PC-3 (cell line): ENCODE measurements at regions of chr12 and their contacts with region 1.

Region 1: GRCh38 chr12:94560431-94561221 is 89.7 kb downstream of the TMCC3 start:
- DNase-seq: peak; percentile 97
- ATAC-seq: peak; percentile 96
- H3K4me3 ChIP-seq: peak overlapping the region; percentile 46; the same call in 1 of the 2 replicates
- H3K27ac ChIP-seq: peak overlapping the region; percentile 58
- H3K4me1 ChIP-seq: peaks cover 29% of the 10 kb centered on the region
- H3K27me3 ChIP-seq: no peaks in the 10 kb centered on the region
- CTCF ChIP-seq: no peak

Region 2: DNA sequence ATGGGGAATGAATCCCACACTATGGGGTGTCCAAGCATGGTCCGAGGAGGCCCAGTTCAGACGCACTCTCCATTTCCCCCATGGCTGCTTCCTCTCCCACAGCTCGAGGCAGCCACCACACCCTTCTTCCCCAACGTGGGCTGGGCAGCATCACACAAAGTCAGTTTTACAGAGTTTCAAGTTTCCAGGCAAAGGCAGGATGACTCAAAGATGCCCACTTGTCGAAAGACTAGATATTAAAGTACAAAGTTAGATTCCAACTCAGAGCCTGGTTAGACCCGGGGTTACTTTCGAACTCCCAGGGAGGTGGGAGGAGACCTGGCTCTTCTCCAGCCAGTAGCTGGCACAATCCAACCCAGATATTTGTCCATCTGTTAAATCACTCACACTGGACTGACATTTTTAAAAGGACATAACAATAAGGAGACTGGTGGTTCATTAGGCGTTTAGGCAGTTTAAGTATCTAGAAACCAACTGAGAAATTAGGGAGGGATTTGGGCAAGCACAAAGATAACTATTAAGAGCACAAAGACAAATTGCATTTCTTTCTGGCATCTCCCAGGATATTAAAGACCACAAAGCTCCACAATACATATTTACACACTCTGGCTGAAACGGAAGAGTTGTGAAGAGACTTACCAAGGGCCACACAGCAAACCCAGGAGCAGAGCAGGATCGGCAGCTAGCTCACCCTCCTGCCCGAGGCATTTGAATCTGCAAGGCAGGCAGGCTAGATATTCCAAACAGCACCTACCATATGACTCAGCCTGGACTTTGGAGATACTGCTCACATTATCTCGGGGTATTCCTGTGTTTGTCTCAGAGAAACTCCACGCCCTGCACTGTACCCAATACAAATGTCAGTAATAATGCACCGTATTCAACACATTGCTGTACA is 54.9 kb after region 1 on chr12:
- CTCF ChIA-PET with region 1: no interaction called
- POLR2A ChIA-PET with region 1: no interaction called
- intact Hi-C with region 1: loop called (anchors 5 kb)
- DNase-seq: peak; percentile 90
- ATAC-seq: peak; percentile 52
- H3K4me3 ChIP-seq: peak overlapping the region; percentile 62
- H3K27ac ChIP-seq: peak overlapping the region; percentile 99
- H3K4me1 ChIP-seq: peaks cover 60% of the 10 kb centered on the region
- H3K27me3 ChIP-seq: no peaks in the 10 kb centered on the region
- CTCF ChIP-seq: no peak

Region 3: GRCh38 chr12:94745562-94745961 is 184.9 kb after region 1 on chr12:
- CTCF ChIA-PET with region 1: no interaction called
- POLR2A ChIA-PET with region 1: no interaction called
- intact Hi-C with region 1: no loop called
- DNase-seq: no peak
- ATAC-seq: no peak
- H3K4me3 ChIP-seq: no peak overlapping the region
- H3K27ac ChIP-seq: no peak overlapping the region
- H3K4me1 ChIP-seq: no peaks in the 10 kb centered on the region
- H3K27me3 ChIP-seq: peaks cover 12% of the 10 kb centered on the region
- CTCF ChIP-seq: no peak